HEK293T (cell line): ENCODE measurements at regions of chr12 and their contacts with region 1.

Region 1: DNA sequence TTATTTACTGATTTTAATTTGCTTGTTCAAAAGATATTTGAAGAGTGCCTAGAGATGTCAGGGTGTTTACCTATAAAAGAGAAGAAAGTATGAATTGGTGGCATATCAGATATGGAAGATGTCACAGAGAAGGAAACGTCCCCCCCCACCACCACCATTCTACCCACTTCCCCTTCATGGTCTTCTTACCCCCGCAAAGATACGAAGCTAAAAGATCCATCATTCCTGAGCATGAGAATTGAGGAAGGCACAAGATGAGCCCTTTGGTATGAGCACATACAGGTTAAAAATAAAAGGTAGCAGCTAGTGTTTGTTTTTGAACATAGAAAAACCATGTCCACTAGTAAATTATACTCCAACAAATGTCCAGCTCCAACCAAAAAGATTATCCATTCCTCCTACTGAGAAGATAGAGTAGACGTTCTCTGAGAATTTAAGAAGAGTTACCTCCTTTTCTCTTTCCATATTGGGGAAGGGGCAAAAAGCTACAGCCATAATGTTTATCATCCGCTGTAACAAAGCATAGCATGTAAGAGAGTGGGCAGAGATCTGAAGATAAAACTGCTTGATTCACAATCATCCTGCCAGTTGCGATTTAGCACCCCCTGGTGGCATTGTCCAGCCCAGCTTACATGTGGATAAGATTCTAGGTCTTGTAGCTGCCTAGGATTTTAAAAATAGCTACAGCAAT is 29.1 kb downstream of the NFYB start:
- DNase-seq: peak; percentile 66

Region 2: DNA sequence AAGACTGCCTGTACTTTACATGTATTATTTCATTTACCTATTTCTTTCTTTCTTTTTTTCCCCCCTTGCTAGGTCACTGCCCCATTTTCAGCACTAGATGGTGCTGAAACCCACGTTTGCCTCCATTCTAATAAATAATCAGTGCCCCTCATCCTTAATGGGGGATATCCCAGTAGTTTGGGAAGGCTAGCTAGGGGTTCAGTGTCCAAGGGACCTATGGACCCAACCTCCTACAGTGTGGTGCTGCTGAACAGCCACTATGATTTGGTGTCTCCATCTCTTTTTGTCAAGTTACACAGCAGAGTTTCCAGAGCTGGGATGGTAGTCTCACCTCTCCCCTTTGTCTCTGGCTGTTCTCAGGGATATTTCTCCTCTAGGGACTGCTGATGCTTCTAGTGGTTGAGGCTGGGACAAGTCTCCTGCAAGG is 51.1 kb before region 1 on chr12:
- CTCF ChIA-PET with region 1: interaction called, 12 read pairs
- POLR2A ChIA-PET with region 1: no interaction called
- DNase-seq: peak; percentile 33

Region 3: GRCh38 chr12:104143918-104144317 is 35.0 kb after region 1 on chr12:
- CTCF ChIA-PET with region 1: no interaction called
- POLR2A ChIA-PET with region 1: no interaction called
- DNase-seq: no peak